ENCODE measurements at regions of chr2 and their contacts with region 1.

Region 1: DNA sequence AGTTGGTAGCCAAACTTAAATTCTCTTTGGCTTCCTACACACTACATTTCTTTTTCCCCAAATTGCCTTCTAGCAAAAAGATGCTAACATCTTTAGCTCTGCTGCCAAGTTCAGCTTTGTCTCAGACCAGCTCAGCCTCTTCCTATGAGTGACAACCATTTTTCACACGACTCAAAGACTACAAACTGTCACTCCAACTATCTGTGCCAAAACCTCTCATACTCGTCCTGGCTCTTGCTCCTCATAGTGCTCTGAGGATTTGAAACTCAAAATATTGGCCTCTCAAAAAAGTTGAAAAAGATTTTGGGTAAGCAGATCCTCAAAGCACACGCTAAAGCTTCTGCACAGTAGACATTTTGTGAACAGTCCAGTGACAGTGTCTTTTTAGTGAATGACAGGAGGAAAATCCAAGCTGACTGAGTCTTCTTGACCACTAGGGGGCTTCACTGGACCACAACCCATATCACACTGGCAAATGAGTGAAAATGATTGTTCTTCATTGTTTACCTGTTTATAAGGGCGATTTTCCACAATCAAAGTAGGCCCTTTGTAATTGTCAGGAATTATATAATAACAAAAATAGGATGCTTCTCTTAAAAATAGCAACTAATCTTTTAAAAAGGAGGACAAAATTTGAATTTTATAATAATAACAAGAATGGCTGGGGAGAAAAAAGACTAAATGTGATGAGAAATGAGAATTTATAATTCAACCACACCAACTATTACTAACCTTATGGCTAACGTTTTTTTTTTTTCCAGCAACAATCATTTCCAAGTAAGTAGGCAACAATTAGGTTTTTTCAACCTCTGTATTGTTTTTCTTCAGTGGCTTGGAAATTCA is 85.5 kb upstream of the PGAP1 start:
- DNase-seq: no peak
- ATAC-seq: peak; percentile 57
- H3K4me3 Mint-ChIP-seq: no peak overlapping the region
- H3K27ac Mint-ChIP-seq: peak overlapping the region; percentile 74
- H3K4me1 Mint-ChIP-seq: peaks cover 5% of the 10 kb centered on the region
- H3K27me3 Mint-ChIP-seq: no peaks in the 10 kb centered on the region
- CTCF ChIP-seq: no peak

Region 2: DNA sequence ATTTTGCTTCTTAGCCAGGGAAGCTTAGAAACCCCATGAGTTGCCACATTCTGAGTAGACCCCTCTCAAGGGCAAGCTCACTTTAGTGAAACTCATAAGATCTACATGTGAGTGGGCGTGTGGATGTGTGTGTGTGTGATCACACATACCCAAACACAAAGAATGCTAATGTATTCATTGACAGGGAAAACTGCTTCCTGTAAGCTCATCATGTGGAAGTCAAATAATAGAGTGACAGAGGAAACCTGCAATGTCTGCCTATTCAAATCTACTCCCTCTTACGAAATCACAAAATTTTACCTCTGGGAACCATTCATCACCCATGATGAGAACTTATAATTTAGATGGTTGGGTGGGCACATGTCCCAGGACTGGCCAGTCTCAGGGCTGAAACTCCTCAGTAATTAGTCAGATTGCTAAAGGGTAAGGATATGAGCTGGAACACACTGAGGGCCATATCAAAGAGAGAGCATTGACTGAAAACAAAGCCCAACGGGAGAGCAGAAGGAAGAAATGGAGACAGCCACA is 467.1 kb before region 1 on chr2:
- CTCF ChIA-PET with region 1: no interaction called
- POLR2A ChIA-PET with region 1: no interaction called
- intact Hi-C with region 1: no loop called
- DNase-seq: no peak
- ATAC-seq: no peak
- H3K4me3 Mint-ChIP-seq: no peak overlapping the region
- H3K27ac Mint-ChIP-seq: no peak overlapping the region
- H3K4me1 Mint-ChIP-seq: no peaks in the 10 kb centered on the region
- H3K27me3 Mint-ChIP-seq: peaks cover 21% of the 10 kb centered on the region
- CTCF ChIP-seq: no peak

Region 3: GRCh38 chr2:196783431-196784094 is 228.5 kb before region 1 on chr2:
- CTCF ChIA-PET with region 1: no interaction called
- POLR2A ChIA-PET with region 1: no interaction called
- intact Hi-C with region 1: loop called (anchors 10 kb)
- DNase-seq: no peak
- ATAC-seq: no peak
- H3K4me3 Mint-ChIP-seq: no peak overlapping the region
- H3K27ac Mint-ChIP-seq: no peak overlapping the region
- H3K4me1 Mint-ChIP-seq: no peaks in the 10 kb centered on the region
- H3K27me3 Mint-ChIP-seq: no peaks in the 10 kb centered on the region
- CTCF ChIP-seq: no peak

Region 4: DNA sequence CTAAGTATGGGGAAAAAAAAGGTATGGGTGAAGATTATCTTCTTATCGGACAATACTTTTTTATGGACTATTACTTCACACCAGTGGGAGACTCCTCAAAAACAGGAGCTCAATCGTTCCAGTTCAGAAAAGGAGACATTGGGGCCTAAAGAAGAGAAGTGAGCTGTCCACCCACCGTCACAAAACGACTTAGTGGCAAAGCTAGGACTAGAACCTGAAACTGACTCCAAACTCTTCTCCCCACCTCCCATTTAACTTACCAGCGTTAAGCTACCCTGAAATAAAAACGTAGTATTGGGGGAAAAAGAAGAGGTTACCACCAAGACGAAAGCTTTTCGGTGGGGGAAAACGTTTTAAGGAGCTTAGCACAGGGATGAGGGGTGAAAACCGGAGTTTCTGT is 213.0 kb before region 1 on chr2:
- CTCF ChIA-PET with region 1: no interaction called
- POLR2A ChIA-PET with region 1: no interaction called
- intact Hi-C with region 1: no loop called
- DNase-seq: no peak
- ATAC-seq: no peak
- H3K4me3 Mint-ChIP-seq: peak overlapping the region; percentile 97
- H3K27ac Mint-ChIP-seq: peak overlapping the region; percentile 92
- H3K4me1 Mint-ChIP-seq: peaks cover 18% of the 10 kb centered on the region
- H3K27me3 Mint-ChIP-seq: peaks cover 7% of the 10 kb centered on the region
- CTCF ChIP-seq: no peak

Region 5: DNA sequence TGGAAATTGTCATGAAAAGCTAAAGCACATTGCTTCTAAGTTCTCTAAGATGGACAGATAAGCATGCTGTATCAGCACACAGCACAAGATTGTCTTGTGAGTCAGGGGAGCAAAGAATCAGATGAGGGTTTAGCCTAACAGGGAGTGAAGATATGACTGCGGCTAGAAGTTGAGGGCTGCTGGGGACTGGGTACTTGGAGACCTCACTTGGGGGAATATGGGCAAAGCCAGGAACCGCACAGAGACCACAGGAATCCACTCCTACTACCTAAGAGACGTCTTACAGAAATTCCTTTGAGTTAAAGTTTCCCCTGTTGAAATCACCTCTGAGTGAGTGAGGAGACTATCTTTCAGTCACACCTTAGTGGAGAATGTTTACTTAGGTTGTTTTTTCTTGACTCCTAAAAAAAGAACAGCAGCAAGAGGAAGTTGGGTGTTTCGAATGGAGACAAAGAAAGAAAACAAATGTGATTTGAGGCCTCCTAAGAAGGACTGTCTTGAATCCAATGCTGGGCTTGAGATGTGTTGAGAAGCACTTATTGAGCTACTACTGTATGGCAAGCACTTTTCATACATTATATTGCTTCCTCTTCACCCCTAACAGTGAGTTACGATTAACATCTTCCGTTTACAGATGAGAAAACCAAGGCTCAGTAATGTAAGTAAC is 197.9 kb after region 1 on chr2:
- CTCF ChIA-PET with region 1: no interaction called
- POLR2A ChIA-PET with region 1: no interaction called
- intact Hi-C with region 1: no loop called
- DNase-seq: no peak
- ATAC-seq: peak; percentile 13
- H3K4me3 Mint-ChIP-seq: peak overlapping the region; percentile 66
- H3K27ac Mint-ChIP-seq: peak overlapping the region; percentile 98
- H3K4me1 Mint-ChIP-seq: peaks cover 99% of the 10 kb centered on the region
- H3K27me3 Mint-ChIP-seq: no peaks in the 10 kb centered on the region
- CTCF ChIP-seq: no peak

Region 6: GRCh38 chr2:197777823-197778407 is 765.9 kb after region 1 on chr2:
- CTCF ChIA-PET with region 1: no interaction called
- POLR2A ChIA-PET with region 1: no interaction called
- intact Hi-C with region 1: loop called (anchors 5 kb)
- DNase-seq: no peak
- ATAC-seq: no peak
- H3K4me3 Mint-ChIP-seq: no peak overlapping the region
- H3K27ac Mint-ChIP-seq: no peak overlapping the region
- H3K4me1 Mint-ChIP-seq: no peaks in the 10 kb centered on the region
- H3K27me3 Mint-ChIP-seq: peaks cover 7% of the 10 kb centered on the region
- CTCF ChIP-seq: peak; percentile 23